ENCODE measurements at regions of chr22 and their contacts with region 1.

Region 1: DNA sequence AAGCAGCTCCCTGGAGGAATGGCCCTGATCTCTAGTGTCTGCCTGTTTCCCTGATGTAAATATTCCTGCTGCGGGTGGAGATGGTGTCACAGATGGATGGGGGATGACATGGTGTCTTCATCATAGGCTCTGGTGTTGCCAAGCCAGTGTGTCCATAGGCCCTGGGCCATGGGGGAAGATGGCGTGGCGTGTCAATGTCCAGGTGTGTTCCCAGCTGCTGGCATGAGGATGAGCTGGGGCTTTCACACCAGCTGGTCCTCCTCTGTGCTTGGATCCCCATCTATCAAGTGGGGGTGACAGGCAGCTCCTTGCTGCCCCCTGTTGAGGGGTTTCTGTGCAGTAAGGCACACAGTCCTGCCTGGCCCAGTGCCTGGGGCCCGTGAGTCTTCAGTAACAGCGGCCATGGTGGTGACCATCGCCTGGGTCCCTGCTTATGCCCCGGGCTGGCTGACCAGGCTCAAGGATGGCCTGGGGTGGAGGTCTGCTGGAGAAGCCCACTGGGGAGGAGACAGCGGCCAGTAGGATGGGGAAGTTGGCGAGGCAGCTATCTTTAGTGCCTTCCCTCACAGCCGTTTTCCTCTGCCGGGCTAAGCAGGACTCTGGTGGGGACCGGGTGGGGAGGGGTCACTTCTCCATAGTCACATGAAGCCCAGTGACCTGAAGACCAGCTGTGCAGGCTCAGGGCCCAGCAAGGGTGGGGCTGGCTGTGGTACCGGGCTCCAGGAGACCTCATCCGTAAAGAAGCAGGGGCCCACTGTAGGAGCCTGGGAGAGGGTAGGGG is 12.7 kb downstream of the RPL3 start:
- DNase-seq: peak; percentile 71
- H3K4me3 ChIP-seq: no peak overlapping the region
- H3K27ac ChIP-seq: no peak overlapping the region
- H3K4me1 ChIP-seq: peaks cover 14% of the 10 kb centered on the region
- H3K27me3 ChIP-seq: no peaks in the 10 kb centered on the region
- CTCF ChIP-seq: peak; percentile 46 to 71
- POLR2A ChIP-seq: no peak

Region 2: DNA sequence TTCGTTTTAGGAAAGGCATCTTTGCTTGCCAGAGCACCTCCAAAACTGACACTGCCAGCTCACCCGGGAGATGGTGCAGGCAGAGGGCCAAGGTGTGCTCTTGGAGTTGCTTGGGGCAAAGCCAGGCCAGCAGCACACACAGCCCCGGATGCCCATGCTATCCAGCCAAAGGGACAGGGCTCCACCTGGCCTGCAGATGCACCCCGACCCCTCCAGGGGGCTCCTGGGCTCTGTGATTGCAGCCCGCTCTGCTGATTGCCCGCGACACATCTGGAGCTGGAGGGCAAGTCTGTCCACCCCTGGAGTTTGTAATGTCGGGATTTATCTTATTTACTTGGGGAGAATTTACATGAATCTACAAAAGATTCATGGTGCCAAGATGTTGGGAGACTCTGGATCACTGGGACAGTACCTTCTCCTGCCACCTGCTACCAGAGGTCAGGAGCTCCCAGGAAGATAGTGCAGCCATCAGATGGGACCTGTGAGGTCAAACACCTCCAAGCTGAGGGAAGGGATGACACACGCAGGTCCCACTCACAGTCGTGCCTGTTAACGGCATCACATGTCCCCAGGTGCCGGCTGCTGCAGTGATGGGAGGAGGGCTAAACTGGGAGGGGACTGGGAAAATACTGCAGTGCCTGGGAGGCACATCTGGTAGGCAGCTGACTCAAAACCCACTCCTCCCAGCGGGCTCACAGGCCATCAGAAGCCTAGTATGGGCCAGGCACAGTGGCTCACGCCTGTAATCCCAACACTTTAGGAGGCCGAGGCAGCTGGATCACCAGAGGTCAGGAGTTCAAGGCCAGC is 171.5 kb before region 1 on chr22:
- CTCF ChIA-PET with region 1: interaction called, 46 read pairs
- POLR2A ChIA-PET with region 1: no interaction called
- dilution Hi-C with region 1: no loop called
- intact Hi-C with region 1: loop called (anchors 1 kb)
- DNase-seq: peak; percentile 39
- H3K4me3 ChIP-seq: no peak overlapping the region
- H3K27ac ChIP-seq: no peak overlapping the region
- H3K4me1 ChIP-seq: no peaks in the 10 kb centered on the region
- H3K27me3 ChIP-seq: no peaks in the 10 kb centered on the region
- CTCF ChIP-seq: peak; percentile 70 to 81
- POLR2A ChIP-seq: no peak

Region 3: GRCh38 chr22:39236321-39237317 is 70.2 kb before region 1 on chr22:
- CTCF ChIA-PET with region 1: interaction called, 29 read pairs
- POLR2A ChIA-PET with region 1: interaction called, 5 read pairs
- dilution Hi-C with region 1: no loop called
- intact Hi-C with region 1: loop called (anchors 1 kb)
- DNase-seq: no peak
- H3K4me3 ChIP-seq: no peak overlapping the region
- H3K27ac ChIP-seq: peak overlapping the region; percentile 88
- H3K4me1 ChIP-seq: peaks cover 91% of the 10 kb centered on the region
- H3K27me3 ChIP-seq: no peaks in the 10 kb centered on the region
- CTCF ChIP-seq: no peak
- POLR2A ChIP-seq: peak; percentile 19

Region 4: GRCh38 chr22:39253435-39254070 is 53.2 kb before region 1 on chr22:
- CTCF ChIA-PET with region 1: interaction called, 37 read pairs
- POLR2A ChIA-PET with region 1: no interaction called
- dilution Hi-C with region 1: no loop called
- intact Hi-C with region 1: no loop called
- DNase-seq: peak; percentile 92
- H3K4me3 ChIP-seq: no peak overlapping the region
- H3K27ac ChIP-seq: peak overlapping the region; percentile 96
- H3K4me1 ChIP-seq: peaks cover 38% of the 10 kb centered on the region
- H3K27me3 ChIP-seq: no peaks in the 10 kb centered on the region
- CTCF ChIP-seq: no peak
- POLR2A ChIP-seq: no peak

Region 5: DNA sequence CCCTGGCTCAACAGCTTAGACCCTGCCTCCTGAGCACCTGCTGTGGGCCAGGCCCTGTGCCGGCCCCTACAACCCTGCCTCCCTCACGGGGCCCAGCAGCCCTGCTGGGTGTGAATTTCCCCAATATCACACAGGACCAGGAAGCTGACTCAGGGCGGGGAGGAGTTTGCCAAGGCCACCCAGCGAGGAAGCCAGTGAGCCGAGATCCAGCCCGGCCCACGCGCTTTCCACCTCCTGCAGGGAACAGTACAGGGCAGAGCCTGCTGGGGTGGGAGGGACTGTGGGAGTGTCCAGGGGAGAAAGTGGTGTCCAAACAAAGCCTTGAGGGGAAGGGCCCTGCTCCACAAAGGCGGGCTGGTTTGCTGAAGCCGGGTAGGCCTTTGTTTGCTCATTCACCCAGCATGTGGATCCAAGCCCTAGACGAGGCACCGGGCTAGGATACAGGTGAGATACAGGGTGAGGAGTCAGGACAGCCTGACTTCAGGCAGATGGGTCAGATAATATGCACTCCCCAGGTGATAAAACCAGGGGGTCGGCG is 14.1 kb before region 1 on chr22:
- CTCF ChIA-PET with region 1: interaction called, 12 read pairs
- POLR2A ChIA-PET with region 1: interaction called, 3 read pairs
- dilution Hi-C with region 1: no loop called
- intact Hi-C with region 1: loop called (anchors 1 kb)
- DNase-seq: peak; percentile 96
- H3K4me3 ChIP-seq: no peak overlapping the region
- H3K27ac ChIP-seq: peak overlapping the region; percentile 85
- H3K4me1 ChIP-seq: peaks cover 17% of the 10 kb centered on the region
- H3K27me3 ChIP-seq: no peaks in the 10 kb centered on the region
- CTCF ChIP-seq: no peak
- POLR2A ChIP-seq: peak; percentile 56

Region 6: DNA sequence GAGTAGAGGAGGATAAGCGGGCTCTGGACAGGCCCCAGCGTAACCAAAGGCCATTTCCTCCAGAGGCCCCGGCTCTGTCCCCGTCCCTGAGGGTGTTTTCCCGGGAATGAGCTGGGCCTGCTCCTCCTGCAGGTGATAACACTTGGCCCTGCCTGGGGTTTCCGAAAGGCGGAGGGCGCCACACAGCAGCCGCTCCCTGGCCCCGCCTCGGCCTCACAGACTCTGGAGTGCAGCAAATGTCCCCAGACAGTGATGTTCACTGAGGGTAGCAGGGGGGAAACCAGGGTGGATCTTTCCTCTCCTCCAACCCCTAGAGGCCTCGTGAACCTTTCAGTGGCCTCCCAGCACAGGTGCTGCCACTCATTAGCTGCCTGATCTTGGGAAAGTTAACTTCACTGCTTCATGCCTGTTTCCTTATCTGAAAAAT is 139.5 kb after region 1 on chr22:
- CTCF ChIA-PET with region 1: no interaction called
- POLR2A ChIA-PET with region 1: no interaction called
- dilution Hi-C with region 1: no loop called
- intact Hi-C with region 1: no loop called
- DNase-seq: no peak
- H3K4me3 ChIP-seq: no peak overlapping the region
- H3K27ac ChIP-seq: no peak overlapping the region
- H3K4me1 ChIP-seq: no peaks in the 10 kb centered on the region
- H3K27me3 ChIP-seq: no peaks in the 10 kb centered on the region
- CTCF ChIP-seq: no peak
- POLR2A ChIP-seq: no peak

Measured in endothelial cell of umbilical vein (primary cell).